Mucosa of descending colon (tissue), 3 donors: ENCODE measurements at regions of chr3 and their contacts with region 1.

Region 1: DNA sequence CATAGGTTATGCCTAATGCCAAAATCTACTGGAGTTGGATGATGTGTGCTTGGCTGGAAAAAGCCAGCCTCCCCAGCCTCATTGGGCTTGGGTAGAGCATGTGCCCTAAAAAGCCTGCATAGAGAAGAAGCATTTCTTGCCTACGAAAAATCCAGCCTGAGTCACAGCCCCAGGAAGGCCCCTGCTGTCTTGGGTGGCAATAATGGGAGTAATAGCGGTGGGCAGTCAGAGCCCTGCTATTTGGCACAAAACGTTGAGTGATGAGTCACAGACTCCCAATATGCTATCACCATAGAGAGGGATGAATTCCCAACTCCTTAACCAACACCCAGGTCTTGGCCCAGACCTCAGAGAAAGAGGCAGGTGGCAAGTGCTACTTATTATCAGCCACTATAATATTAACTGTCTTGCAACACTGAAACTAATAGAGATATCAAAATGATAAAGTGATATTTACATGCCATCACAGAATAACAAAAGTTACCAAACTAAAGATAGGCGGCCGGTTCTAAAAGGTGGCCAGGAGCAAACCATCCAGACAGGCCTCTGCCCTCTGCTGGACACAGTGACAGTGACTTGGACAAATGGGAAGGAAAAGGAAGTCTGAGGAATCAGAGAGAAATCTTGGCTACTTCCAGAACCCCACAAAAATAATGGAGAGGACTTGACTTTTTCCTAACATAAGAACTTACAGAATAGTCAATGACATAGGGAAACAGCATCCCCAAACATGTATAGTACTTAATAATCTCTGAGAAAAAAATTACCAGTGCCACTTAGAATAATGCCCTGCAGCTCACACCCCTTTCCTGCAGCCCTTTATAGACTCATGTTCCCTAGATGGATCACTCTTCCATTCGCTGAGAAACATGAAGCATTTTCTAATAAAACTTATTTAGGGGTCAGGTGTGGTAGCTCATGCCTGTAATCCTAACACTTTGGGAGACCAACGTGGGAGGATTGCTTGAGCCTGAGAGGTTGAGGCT is 51.9 kb upstream of the MUC13 start:
- DNase-seq: peak in 2 of 3 donors; percentile 56 to 82
- ATAC-seq: peak; percentile 72
- H3K4me3 ChIP-seq: no peak overlapping the region
- H3K4me1 ChIP-seq: peaks cover 18% of the 10 kb centered on the region
- CTCF ChIP-seq: peak; percentile 54

Region 2: GRCh38 chr3:124928333-124929202 is 57.9 kb before region 1 on chr3:
- intact Hi-C with region 1: loop called in 1 of 2 experiments (anchors 2 kb)
- DNase-seq: peak in 1 of 3 donors; percentile 91
- ATAC-seq: peak; percentile 46
- H3K4me3 ChIP-seq: no peak overlapping the region
- H3K4me1 ChIP-seq: peaks cover 8% of the 10 kb centered on the region
- CTCF ChIP-seq: peak; percentile 44